Astrocyte of the cerebellum (primary cell): ENCODE measurements at regions of chr5 and their contacts with region 1.

Region 1: DNA sequence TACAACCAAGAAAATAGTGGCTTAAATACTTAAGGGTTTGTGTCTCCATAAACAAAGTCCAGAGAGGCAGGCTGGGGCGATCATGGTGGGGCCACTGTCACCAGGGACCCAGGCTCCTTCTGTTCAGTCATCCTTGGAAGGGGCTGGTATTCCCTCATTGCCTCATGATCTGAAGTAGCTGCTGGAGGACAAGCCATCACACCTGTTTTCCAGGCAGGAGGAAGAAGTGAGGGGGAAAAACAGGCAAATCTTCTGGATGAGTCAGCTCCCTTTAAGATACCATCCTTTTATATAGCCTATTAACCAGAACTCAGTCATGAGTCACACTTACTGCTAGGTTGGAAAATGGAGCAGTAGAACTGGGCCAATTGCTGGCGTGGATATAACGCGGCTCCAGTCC is 92.3 kb downstream of the DAP start:
- DNase-seq: no peak
- H3K4me3 ChIP-seq: no peak overlapping the region
- CTCF ChIP-seq: no peak

Region 2: DNA sequence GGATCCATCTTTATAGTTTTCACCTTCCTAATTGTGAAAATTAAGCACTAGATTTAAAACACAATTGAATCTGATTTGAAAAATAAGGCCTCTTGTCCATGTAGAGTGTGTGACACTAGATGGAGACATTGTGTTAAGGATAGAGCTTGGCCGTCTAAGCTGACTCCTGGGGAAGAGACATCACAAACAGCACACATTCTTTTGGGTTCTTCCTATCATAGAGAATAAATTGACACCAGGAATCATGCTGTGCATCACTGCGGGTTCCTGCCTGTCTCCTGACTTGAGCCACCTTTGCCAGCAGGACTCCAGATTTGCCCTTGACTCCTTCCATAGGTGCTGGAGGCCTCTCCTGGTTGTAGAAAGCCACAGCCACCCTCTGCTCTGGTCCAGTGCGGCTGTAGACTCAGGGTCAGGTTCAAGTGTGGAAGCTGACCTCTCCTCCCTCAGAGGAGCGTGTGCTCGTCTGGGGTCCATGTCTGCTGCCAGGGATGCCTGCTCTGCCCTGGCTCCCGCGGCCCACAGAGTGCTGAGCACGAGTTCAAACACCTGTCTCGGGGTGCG is 215.8 kb before region 1 on chr5:
- in situ Hi-C with region 1: loop called (anchors 5 kb)
- DNase-seq: peak; percentile 83
- H3K4me3 ChIP-seq: no peak overlapping the region
- CTCF ChIP-seq: peak; percentile 71

Region 3: GRCh38 chr5:10635257-10635866 is 33.3 kb before region 1 on chr5:
- in situ Hi-C with region 1: no loop called
- DNase-seq: no peak
- H3K4me3 ChIP-seq: no peak overlapping the region
- CTCF ChIP-seq: no peak